Calu3 (cell line): ENCODE measurements at regions of chr15 and their contacts with region 1.

Region 1: DNA sequence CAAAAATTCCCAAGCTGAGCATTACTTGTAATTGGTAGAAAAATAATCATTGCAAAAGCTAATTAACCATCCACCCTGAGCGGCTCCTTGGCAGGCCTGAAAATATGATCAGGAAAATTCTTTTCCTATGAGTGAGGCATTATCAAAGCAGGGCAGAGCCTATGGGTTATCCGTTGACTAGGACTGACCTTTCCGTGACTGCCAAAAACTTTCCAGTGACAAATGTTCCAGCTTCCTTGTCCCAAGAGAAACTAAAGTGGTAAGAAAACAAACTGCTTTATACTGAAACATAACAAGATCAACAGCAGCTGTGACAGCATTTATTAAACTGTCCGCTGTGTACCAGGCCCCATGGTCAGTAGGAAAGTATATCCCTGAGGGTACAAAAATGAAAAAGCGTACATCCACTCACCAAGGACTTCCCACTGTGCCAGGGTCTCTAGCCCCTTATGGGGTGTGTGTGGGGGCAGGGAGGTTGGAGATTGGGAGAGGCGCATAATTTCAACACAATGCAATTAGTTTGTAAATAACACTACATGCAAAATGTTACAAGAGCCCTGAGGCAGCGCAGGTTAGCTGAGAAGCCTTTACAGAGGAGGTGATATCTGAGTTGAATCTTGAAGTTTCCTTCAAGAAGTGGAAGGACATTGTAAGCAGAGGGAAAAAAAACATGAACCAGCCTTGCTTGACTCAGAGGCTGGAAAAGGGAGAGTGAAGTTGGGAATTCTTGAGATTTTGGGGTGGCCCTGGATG is 8.5 kb downstream of the LIPC start:
- DNase-seq: peak; percentile 68
- H3K4me3 Mint-ChIP-seq: peak overlapping the region; percentile 30
- H3K27ac Mint-ChIP-seq: peak overlapping the region; percentile 76
- H3K4me1 Mint-ChIP-seq: peaks cover 78% of the 10 kb centered on the region
- H3K27me3 Mint-ChIP-seq: no peaks in the 10 kb centered on the region
- CTCF ChIP-seq: no peak

Region 2: GRCh38 chr15:58269455-58270414 is 170.6 kb before region 1 on chr15:
- CTCF ChIA-PET with region 1: interaction called, 8 read pairs
- intact Hi-C with region 1: loop called (anchors 1 kb)
- DNase-seq: peak; percentile 76
- H3K4me3 Mint-ChIP-seq: no peak overlapping the region
- H3K27ac Mint-ChIP-seq: peak overlapping the region; percentile 42
- H3K4me1 Mint-ChIP-seq: peaks cover 18% of the 10 kb centered on the region
- H3K27me3 Mint-ChIP-seq: no peaks in the 10 kb centered on the region
- CTCF ChIP-seq: peak; percentile 74

Region 3: GRCh38 chr15:58528188-58528870 is 88.0 kb after region 1 on chr15:
- CTCF ChIA-PET with region 1: interaction called, 4 read pairs
- intact Hi-C with region 1: loop called (anchors 1 kb)
- DNase-seq: peak; percentile 70
- H3K4me3 Mint-ChIP-seq: peak overlapping the region; percentile 22
- H3K27ac Mint-ChIP-seq: peak overlapping the region; percentile 86
- H3K4me1 Mint-ChIP-seq: peaks cover 56% of the 10 kb centered on the region
- H3K27me3 Mint-ChIP-seq: no peaks in the 10 kb centered on the region
- CTCF ChIP-seq: no peak